PC-9 (cell line): ENCODE measurements at regions of chr5 and their contacts with region 1.

Region 1: GRCh38 chr5:104062600-104063377 is 500.2 kb upstream of the NUDT12 start:
- DNase-seq: peak in 1 of 2 experiments; percentile 2
- H3K4me3 ChIP-seq: peak overlapping the region; percentile 40; the same call in 1 of the 2 replicates
- H3K27ac ChIP-seq: 0 out of 2 replicates have a peak overlapping the region, but pooled peaks have one; percentile 11
- H3K4me1 ChIP-seq: peaks cover 15% of the 10 kb centered on the region
- H3K27me3 ChIP-seq: no peaks in the 10 kb centered on the region
- CTCF ChIP-seq: no peak

Region 2: DNA sequence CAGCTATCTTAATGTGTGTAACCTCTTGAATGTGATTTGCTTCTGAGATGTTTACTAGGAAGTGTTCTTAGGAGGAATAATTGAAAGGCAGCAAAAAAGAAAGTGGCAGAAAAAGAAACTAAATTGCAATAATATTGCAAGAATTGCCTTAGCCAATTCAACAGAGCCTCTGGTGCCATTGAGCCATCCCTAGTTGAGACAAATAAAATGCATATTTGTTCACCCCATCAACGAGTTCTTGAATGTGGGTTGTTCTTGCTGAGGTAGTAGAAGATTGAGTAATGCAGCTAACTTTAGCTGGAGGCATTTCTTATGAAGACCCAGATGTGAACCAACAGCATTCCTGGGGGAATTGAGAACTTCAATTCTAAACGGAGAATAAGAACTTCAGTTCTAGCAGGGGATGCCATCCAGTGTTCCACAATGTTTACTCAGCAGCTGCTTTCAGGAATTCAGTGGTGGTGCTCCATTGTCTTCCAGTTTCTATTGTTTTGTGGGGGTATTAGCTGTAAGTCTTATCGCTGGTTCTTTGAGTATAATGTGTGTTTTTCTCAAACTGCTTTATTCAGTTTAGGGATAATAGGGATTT is 1467.9 kb after region 1 on chr5:
- CTCF ChIA-PET with region 1: interaction called, 12 read pairs
- POLR2A ChIA-PET with region 1: no interaction called
- intact Hi-C with region 1: no loop called
- DNase-seq: no peak
- H3K4me3 ChIP-seq: no peak overlapping the region
- H3K27ac ChIP-seq: no peak overlapping the region
- H3K4me1 ChIP-seq: no peaks in the 10 kb centered on the region
- H3K27me3 ChIP-seq: no peaks in the 10 kb centered on the region
- CTCF ChIP-seq: no peak